ENCODE measurements at regions of chr22 and their contacts with region 1.

Region 1: GRCh38 chr22:31630331-31631329 is 31.4 kb downstream of the PISD start:
- DNase-seq: peak; percentile 91
- ATAC-seq: peak; percentile 74

Region 2: GRCh38 chr22:31561238-31561887 is 69.3 kb before region 1 on chr22:
- intact Hi-C with region 1: loop called (anchors 2 kb)
- DNase-seq: peak; percentile 76
- ATAC-seq: peak; percentile 96

Region 3: DNA sequence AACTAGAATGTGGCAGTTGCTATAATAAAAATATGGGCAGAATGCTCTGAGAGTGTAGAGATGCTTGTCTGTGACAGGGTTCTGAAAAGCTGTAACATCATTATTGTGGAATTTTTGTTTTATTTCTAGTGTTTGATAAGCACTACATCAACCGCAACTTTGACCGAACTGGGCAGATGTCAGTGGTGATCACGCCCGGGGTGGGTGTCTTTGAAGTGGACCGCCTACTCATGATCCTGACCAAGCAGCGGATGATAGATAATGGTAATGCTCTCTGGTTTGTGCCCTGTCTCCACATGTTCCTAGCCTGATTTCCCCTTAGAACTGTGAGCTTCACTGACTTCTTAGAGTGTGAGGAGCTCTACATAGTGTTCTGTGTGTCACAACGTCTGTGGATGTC is 171.9 kb after region 1 on chr22:
- intact Hi-C with region 1: no loop called
- DNase-seq: no peak
- ATAC-seq: no peak

Region 4: DNA sequence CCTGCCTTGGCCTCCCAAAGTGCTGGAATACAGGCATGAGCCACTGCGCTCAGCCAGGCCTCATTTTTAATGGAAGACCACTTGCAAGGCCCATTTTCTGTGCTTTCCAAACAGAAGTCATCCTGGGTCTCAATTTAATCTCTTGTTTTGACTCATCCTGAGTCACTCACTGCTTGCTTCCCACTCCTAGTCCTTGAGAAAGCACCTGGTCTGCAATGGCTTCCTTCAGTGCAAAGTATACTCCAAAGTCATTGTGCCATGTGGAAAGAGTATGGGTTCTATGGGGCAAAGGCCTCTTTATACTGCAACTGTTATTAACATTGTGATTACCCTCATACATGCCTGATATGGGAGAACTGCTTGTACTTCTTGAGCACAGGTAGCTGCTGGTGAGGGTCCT is 394.2 kb after region 1 on chr22:
- intact Hi-C with region 1: no loop called
- DNase-seq: no peak
- ATAC-seq: no peak